B cell (primary cell): ENCODE measurements at regions of chr1 and their contacts with region 1.

Region 1: DNA sequence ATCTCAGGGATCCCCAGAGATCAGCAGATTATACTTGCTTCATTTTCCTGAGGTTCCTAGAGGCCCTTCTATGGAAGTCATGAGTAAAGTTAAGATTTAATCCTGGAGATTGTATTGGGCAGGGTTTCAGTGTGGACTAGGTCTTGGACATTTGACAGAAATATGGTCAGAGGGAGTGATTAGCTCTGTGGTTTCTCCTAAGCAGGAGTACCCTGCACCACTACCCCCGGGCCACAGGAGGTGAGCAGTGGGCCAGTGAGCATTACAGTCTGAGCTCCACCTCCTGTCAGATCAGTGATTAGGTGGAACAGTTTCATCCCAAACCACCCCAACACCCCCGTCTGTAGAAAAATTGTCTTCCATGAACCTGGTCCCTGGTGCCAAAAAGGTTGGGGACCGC is 43.2 kb downstream of the PHACTR4 start:
- DNase-seq: no peak
- ATAC-seq: no peak
- H3K4me3 ChIP-seq: no peak overlapping the region
- H3K4me3 Mint-ChIP-seq: no peak overlapping the region
- H3K27ac ChIP-seq: no peak overlapping the region
- H3K27ac Mint-ChIP-seq: no peak overlapping the region
- H3K4me1 ChIP-seq: peaks cover 2 to 6% of the 10 kb centered on the region in 2 donors
- H3K4me1 Mint-ChIP-seq: peaks cover 13% of the 10 kb centered on the region
- H3K27me3 ChIP-seq: no peaks in the 10 kb centered on the region
- H3K27me3 Mint-ChIP-seq: no peaks in the 10 kb centered on the region
- CTCF ChIP-seq: no peak

Region 2: GRCh38 chr1:28602536-28603439 is 190.1 kb after region 1 on chr1:
- CTCF ChIA-PET with region 1: interaction called, 14 read pairs
- POLR2A ChIA-PET with region 1: no interaction called
- intact Hi-C with region 1: loop called (anchors 1 kb)
- DNase-seq: peak; percentile 57
- ATAC-seq: peak; percentile 28
- H3K4me3 ChIP-seq: no peak overlapping the region
- H3K4me3 Mint-ChIP-seq: no peak overlapping the region
- H3K27ac ChIP-seq: no peak overlapping the region
- H3K27ac Mint-ChIP-seq: no peak overlapping the region
- H3K4me1 ChIP-seq: no peaks in the 10 kb centered on the region
- H3K4me1 Mint-ChIP-seq: no peaks in the 10 kb centered on the region
- H3K27me3 ChIP-seq: no peaks in the 10 kb centered on the region
- H3K27me3 Mint-ChIP-seq: no peaks in the 10 kb centered on the region
- CTCF ChIP-seq: peak; percentile 45